OCI-LY7 (cell line): ENCODE measurements at regions of chr11 and their contacts with region 1.

Region 1: GRCh38 chr11:48087974-48088681 is 107.8 kb downstream of the PTPRJ start:
- DNase-seq: no peak
- H3K4me3 ChIP-seq: no peak overlapping the region
- H3K27ac ChIP-seq: no peak overlapping the region
- H3K4me1 ChIP-seq: peaks cover 26% of the 10 kb centered on the region
- CTCF ChIP-seq: no peak

Region 2: GRCh38 chr11:48099906-48100446 is 11.8 kb after region 1 on chr11:
- CTCF ChIA-PET with region 1: no interaction called
- POLR2A ChIA-PET with region 1: interaction called, 11 read pairs
- intact Hi-C with region 1: no loop called
- DNase-seq: peak; percentile 33
- H3K4me3 ChIP-seq: no peak overlapping the region
- H3K27ac ChIP-seq: no peak overlapping the region
- H3K4me1 ChIP-seq: peaks cover 49% of the 10 kb centered on the region
- CTCF ChIP-seq: no peak